ENCODE measurements at regions of chr10 and their contacts with region 1.

Region 1: GRCh38 chr10:103470761-103471653 is 8.0 kb downstream of the CALHM3 start:
- DNase-seq: peak; percentile 70
- ATAC-seq: peak; percentile 76
- H3K4me3 Mint-ChIP-seq: peak overlapping the region; percentile 75
- H3K27ac Mint-ChIP-seq: peak overlapping the region; percentile 96
- H3K4me1 Mint-ChIP-seq: peaks cover 72% of the 10 kb centered on the region
- H3K27me3 Mint-ChIP-seq: no peaks in the 10 kb centered on the region
- CTCF ChIP-seq: no peak

Region 2: GRCh38 chr10:103429647-103430046 is 41.4 kb before region 1 on chr10:
- CTCF ChIA-PET with region 1: no interaction called
- POLR2A ChIA-PET with region 1: interaction called, 10 read pairs
- intact Hi-C with region 1: no loop called
- DNase-seq: no peak
- ATAC-seq: no peak
- H3K4me3 Mint-ChIP-seq: no peak overlapping the region
- H3K27ac Mint-ChIP-seq: no peak overlapping the region
- H3K4me1 Mint-ChIP-seq: no peaks in the 10 kb centered on the region
- H3K27me3 Mint-ChIP-seq: no peaks in the 10 kb centered on the region
- CTCF ChIP-seq: no peak

Region 3: DNA sequence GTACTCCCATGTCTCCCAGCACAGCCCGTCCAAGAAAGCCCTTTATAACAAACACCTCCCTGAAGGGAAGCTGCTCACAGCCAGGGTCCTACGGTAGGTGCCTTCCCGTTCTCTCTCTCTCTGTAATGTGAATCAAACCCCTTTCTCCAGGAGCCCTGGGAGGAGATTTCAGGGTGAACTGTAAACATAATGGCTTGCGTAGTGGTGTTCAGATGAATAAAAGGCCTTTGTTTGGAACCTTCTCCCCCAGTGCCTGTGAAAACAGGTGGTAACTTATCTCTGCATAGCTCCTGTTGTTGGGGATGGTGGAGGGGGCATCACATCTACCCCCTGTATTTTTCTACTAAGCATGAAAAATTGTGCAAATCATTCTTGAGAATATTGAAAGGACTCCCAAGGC is 31.2 kb before region 1 on chr10:
- CTCF ChIA-PET with region 1: interaction called, 3 read pairs
- POLR2A ChIA-PET with region 1: interaction called, 3 read pairs
- intact Hi-C with region 1: loop called (anchors 5 kb)
- DNase-seq: no peak
- ATAC-seq: no peak
- H3K4me3 Mint-ChIP-seq: no peak overlapping the region
- H3K27ac Mint-ChIP-seq: peak overlapping the region; percentile 30
- H3K4me1 Mint-ChIP-seq: no peaks in the 10 kb centered on the region
- H3K27me3 Mint-ChIP-seq: no peaks in the 10 kb centered on the region
- CTCF ChIP-seq: no peak

Measured in activated B cell treated with CpG ODN at 0.5 μM for 24 hours (primary cell).